BJ (cell line): ENCODE measurements at regions of chr1 and their contacts with region 1.

Region 1: DNA sequence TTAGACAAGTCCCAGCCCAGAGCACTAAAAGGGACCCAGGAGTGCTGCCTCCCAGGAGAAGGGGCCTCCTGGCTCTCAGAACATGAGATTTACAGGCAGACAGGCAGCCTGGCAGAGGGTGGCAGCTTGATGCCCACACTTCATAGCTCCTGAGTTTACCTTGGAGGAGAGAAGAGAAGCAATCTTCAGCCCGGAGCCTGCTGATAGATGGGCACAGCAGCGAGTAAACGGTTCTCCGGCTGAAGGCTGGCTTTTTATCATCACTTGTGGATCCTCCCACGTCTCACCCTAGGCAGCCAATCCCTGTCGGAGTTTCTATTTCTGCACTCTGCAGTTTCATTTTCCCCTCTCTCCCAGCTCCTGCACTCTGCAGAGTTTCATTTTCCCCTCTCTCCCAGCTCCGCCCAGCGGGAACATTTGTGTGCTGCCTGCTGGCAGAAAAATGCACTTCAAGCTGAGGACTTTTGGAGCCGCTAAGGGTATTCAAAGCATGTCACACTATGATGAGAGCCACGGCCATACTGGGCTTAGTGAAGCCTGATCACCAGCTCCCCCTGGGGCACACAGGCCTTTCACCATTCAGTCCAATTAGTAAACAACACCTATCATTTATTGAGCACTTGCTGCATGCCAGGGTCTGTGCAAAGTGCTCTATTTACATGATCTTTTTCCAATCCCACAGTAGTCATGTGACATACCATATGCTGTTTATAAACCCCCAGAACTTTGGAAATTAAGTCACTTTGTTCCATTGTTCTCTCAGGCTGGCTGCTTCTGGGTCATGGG is at the start of gene IFI6:
- DNase-seq: peak; percentile 92
- H3K4me3 ChIP-seq: peak within 1 kb of the TSS; percentile 50
- H3K27me3 ChIP-seq: no peaks in the 10 kb centered on the region
- CTCF ChIP-seq: peak; percentile 41
- polyA plus RNA-seq, gene IFI6: 68.0 and 75.7 TPM in 2 replicates

Region 2: GRCh38 chr1:26744075-26744959 is 927.8 kb before region 1 on chr1:
- CTCF ChIA-PET with region 1: no interaction called
- POLR2A ChIA-PET with region 1: no interaction called
- DNase-seq: peak; percentile 47
- H3K4me3 ChIP-seq: no peak overlapping the region
- H3K27me3 ChIP-seq: no peaks in the 10 kb centered on the region
- CTCF ChIP-seq: no peak

Region 3: GRCh38 chr1:27577504-27578188 is 94.5 kb before region 1 on chr1:
- CTCF ChIA-PET with region 1: no interaction called
- POLR2A ChIA-PET with region 1: no interaction called
- DNase-seq: no peak
- H3K4me3 ChIP-seq: no peak overlapping the region
- H3K27me3 ChIP-seq: no peaks in the 10 kb centered on the region
- CTCF ChIP-seq: no peak

Region 4: GRCh38 chr1:27719286-27720251 is 47.4 kb after region 1 on chr1:
- CTCF ChIA-PET with region 1: interaction called, 33 read pairs
- POLR2A ChIA-PET with region 1: no interaction called
- DNase-seq: no peak
- H3K4me3 ChIP-seq: no peak overlapping the region
- H3K27me3 ChIP-seq: peaks cover 5% of the 10 kb centered on the region; the same call in 1 of the 2 replicates
- CTCF ChIP-seq: peak; percentile 46

Region 5: GRCh38 chr1:27725374-27726173 is 53.4 kb after region 1 on chr1 and contains the start of gene FAM76A:
- CTCF ChIA-PET with region 1: interaction called, 33 read pairs
- POLR2A ChIA-PET with region 1: interaction called, 5 read pairs
- DNase-seq: peak; percentile 94
- H3K4me3 ChIP-seq: peak within 1 kb of the TSS; percentile 73
- H3K27me3 ChIP-seq: no peaks in the 10 kb centered on the region
- CTCF ChIP-seq: peak; percentile 56
- polyA plus RNA-seq, gene FAM76A: 3.9 and 5.7 TPM in 2 replicates

Region 6: GRCh38 chr1:28886731-28887418 is 1214.7 kb after region 1 on chr1:
- CTCF ChIA-PET with region 1: no interaction called
- POLR2A ChIA-PET with region 1: interaction called, 11 read pairs
- DNase-seq: no peak
- H3K4me3 ChIP-seq: peak overlapping the region; percentile 82
- H3K27me3 ChIP-seq: no peaks in the 10 kb centered on the region
- CTCF ChIP-seq: no peak